ENCODE measurements at regions of chr6 and their contacts with region 1.

Region 1: GRCh38 chr6:97394160-97394748 is 111.2 kb upstream of the MMS22L start:
- DNase-seq: peak; percentile 63
- ATAC-seq: peak; percentile 70
- H3K4me3 ChIP-seq: no peak overlapping the region
- H3K4me3 Mint-ChIP-seq: no peak overlapping the region
- H3K27ac ChIP-seq: no peak overlapping the region
- H3K27ac Mint-ChIP-seq: no peak overlapping the region
- H3K4me1 ChIP-seq: no peaks in the 10 kb centered on the region
- H3K4me1 Mint-ChIP-seq: no peaks in the 10 kb centered on the region
- H3K27me3 ChIP-seq: no peaks in the 10 kb centered on the region
- H3K27me3 Mint-ChIP-seq: peaks cover 15% of the 10 kb centered on the region
- CTCF ChIP-seq: peak; percentile 98

Region 2: GRCh38 chr6:96626759-96627364 is 767.4 kb before region 1 on chr6:
- CTCF ChIA-PET with region 1: no interaction called
- POLR2A ChIA-PET with region 1: no interaction called
- intact Hi-C with region 1: loop called (anchors 5 kb)
- DNase-seq: peak; percentile 40
- ATAC-seq: peak; percentile 67
- H3K4me3 ChIP-seq: no peak overlapping the region
- H3K4me3 Mint-ChIP-seq: no peak overlapping the region
- H3K27ac ChIP-seq: no peak overlapping the region
- H3K27ac Mint-ChIP-seq: no peak overlapping the region
- H3K4me1 ChIP-seq: peaks cover 3 to 4% of the 10 kb centered on the region in 2 donors
- H3K4me1 Mint-ChIP-seq: peaks cover 4% of the 10 kb centered on the region
- H3K27me3 ChIP-seq: no peaks in the 10 kb centered on the region
- H3K27me3 Mint-ChIP-seq: peaks cover 13% of the 10 kb centered on the region
- CTCF ChIP-seq: peak; percentile 63

Region 3: DNA sequence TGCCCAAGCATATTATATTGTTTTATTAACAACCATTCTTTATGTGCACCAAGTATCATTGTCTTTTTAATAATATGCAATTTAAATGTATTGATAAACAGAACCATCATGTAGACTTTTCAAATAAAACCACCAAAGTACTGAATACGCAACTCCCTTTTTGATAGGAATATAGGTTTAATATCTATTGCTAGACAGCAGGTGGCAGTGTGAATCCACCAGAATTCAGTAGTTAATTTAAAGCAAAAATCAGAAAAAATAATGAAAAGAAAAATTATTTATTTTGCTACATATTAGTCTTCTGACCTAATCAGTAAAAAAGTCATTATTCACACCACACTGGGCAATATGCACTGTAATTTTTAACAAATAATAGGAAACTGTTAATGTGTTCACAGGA is 326.0 kb before region 1 on chr6:
- CTCF ChIA-PET with region 1: interaction called, 6 read pairs
- POLR2A ChIA-PET with region 1: no interaction called
- intact Hi-C with region 1: loop called (anchors 1 kb)
- DNase-seq: peak; percentile 14
- ATAC-seq: no peak
- H3K4me3 ChIP-seq: no peak overlapping the region
- H3K4me3 Mint-ChIP-seq: no peak overlapping the region
- H3K27ac ChIP-seq: no peak overlapping the region
- H3K27ac Mint-ChIP-seq: no peak overlapping the region
- H3K4me1 ChIP-seq: no peaks in the 10 kb centered on the region
- H3K4me1 Mint-ChIP-seq: no peaks in the 10 kb centered on the region
- H3K27me3 ChIP-seq: no peaks in the 10 kb centered on the region
- H3K27me3 Mint-ChIP-seq: peaks cover 6% of the 10 kb centered on the region
- CTCF ChIP-seq: peak; percentile 64

Region 4: DNA sequence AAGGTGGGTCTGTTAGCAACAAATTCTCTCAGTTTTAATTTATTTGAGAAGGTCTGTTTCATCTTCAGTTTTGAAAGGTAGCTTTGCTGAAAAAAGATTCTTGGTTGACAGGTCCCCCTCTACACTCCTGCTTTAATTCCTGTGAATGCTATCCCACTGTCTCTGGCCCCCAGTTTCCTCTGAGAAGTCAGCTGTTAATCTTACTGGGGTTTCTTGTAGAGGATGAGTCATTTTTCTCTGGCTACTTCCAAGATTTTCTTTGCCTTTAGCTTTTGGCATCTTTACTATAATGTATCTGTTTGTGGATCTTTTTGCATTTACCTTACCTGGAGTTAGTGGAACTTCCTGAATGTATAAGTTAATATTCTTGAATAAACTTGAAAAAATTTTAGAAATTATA is 234.0 kb before region 1 on chr6:
- CTCF ChIA-PET with region 1: no interaction called
- POLR2A ChIA-PET with region 1: no interaction called
- intact Hi-C with region 1: no loop called
- DNase-seq: no peak
- ATAC-seq: no peak
- H3K4me3 ChIP-seq: no peak overlapping the region
- H3K4me3 Mint-ChIP-seq: no peak overlapping the region
- H3K27ac ChIP-seq: no peak overlapping the region
- H3K27ac Mint-ChIP-seq: no peak overlapping the region
- H3K4me1 ChIP-seq: no peaks in the 10 kb centered on the region
- H3K4me1 Mint-ChIP-seq: no peaks in the 10 kb centered on the region
- H3K27me3 ChIP-seq: no peaks in the 10 kb centered on the region
- H3K27me3 Mint-ChIP-seq: no peaks in the 10 kb centered on the region
- CTCF ChIP-seq: no peak

Region 5: DNA sequence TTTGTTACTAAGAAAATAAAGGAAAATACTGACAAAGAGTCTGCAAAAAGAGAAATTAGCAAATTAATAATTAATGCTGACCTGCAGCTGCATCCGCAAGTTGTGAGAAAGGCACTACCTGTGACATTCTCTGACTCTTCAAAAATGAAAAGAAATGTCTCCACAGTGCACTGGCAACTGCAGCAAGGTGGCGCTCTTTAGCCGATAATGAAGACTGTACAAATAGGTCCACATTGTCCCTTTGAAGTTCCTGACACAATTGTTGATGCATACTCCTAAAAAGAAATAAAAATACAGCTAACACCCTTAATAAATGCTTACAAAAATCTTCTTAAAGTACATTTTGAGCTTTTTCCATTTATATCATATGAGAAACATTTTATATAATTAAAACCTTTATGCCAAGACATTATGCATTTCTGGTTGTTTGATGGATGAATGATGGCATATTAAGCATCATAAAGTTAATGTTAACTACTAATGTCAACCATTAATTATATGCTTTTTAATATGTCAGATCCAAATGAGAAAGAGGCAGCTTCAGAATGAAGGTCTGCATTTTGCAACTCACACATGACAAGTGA is 207.7 kb before region 1 on chr6:
- CTCF ChIA-PET with region 1: interaction called, 40 read pairs
- POLR2A ChIA-PET with region 1: no interaction called
- intact Hi-C with region 1: loop called (anchors 1 kb)
- DNase-seq: peak; percentile 63
- ATAC-seq: peak; percentile 66
- H3K4me3 ChIP-seq: no peak overlapping the region
- H3K4me3 Mint-ChIP-seq: no peak overlapping the region
- H3K27ac ChIP-seq: no peak overlapping the region
- H3K27ac Mint-ChIP-seq: no peak overlapping the region
- H3K4me1 ChIP-seq: no peaks in the 10 kb centered on the region
- H3K4me1 Mint-ChIP-seq: no peaks in the 10 kb centered on the region
- H3K27me3 ChIP-seq: no peaks in the 10 kb centered on the region
- H3K27me3 Mint-ChIP-seq: no peaks in the 10 kb centered on the region
- CTCF ChIP-seq: peak; percentile 95

Region 6: DNA sequence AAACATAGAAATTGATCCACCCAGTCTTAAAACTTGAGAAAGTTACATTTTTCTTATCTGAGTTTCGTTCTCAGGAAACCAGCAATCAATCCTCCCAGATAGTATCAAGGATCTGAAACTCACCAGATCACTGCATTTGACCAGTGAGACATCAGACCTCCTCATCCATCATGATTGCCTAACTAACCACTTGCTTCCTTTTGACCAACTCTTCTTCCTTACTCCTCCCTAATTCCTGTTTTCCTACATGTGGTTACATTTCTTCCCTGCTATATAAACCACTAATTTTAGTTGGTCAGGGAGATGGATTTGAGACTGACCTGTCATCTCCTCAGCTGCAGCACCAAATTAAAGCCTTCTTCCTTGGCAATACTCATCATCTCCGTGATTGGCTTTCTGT is 1083.0 kb after region 1 on chr6:
- CTCF ChIA-PET with region 1: no interaction called
- POLR2A ChIA-PET with region 1: no interaction called
- intact Hi-C with region 1: no loop called
- DNase-seq: no peak
- ATAC-seq: no peak
- H3K4me3 ChIP-seq: no peak overlapping the region
- H3K4me3 Mint-ChIP-seq: no peak overlapping the region
- H3K27ac ChIP-seq: no peak overlapping the region
- H3K27ac Mint-ChIP-seq: no peak overlapping the region
- H3K4me1 ChIP-seq: no peaks in the 10 kb centered on the region
- H3K4me1 Mint-ChIP-seq: no peaks in the 10 kb centered on the region
- H3K27me3 ChIP-seq: no peaks in the 10 kb centered on the region
- H3K27me3 Mint-ChIP-seq: no peaks in the 10 kb centered on the region
- CTCF ChIP-seq: no peak

Region 7: DNA sequence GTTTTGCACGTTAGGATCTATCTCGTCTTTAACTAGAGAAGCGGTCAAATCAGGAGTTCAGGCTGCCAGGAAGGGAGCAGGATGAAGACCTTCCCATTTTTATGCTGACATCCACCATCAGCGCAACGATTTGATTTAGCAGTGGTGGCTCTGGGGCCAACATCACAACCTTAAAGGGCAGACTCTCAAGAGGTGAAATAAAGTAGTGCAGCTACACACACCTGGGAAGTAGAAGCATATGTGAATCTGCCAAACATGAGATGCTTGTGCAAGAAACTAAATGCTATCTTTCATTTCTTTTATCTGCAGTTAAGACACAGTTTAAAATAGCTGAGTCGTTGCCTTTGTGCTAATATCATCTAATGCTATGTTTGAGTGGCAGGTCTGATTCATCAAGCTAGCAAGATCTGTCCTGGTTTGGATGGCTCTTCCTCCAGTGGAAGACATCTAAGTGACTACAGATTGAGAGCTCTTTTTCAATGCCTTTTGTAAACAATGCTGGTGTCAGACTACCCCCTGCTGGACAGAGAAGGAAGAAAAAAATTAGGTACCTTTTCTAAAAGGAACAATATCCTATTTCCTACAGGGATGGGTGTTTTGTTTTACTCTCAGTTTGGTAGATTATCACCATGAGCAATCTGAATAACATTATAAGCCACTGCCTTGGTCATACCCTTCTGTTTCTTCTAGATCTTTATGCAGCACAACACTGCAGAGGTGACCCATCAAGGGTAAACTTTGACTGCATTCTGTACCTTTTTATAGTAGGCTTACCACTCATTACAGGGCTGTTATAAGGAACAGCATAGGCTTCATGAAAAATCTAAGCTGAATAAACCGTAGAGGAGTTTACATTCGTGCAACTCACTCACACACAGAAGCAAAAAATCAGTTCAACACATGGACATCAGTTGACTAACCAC is 1725.1 kb after region 1 on chr6:
- CTCF ChIA-PET with region 1: no interaction called
- POLR2A ChIA-PET with region 1: no interaction called
- intact Hi-C with region 1: loop called (anchors 10 kb)
- DNase-seq: peak; percentile 44
- ATAC-seq: no peak
- H3K4me3 ChIP-seq: no peak overlapping the region
- H3K4me3 Mint-ChIP-seq: no peak overlapping the region
- H3K27ac ChIP-seq: no peak overlapping the region
- H3K27ac Mint-ChIP-seq: no peak overlapping the region
- H3K4me1 ChIP-seq: no peaks in the 10 kb centered on the region
- H3K4me1 Mint-ChIP-seq: no peaks in the 10 kb centered on the region
- H3K27me3 ChIP-seq: no peaks in the 10 kb centered on the region
- H3K27me3 Mint-ChIP-seq: peaks cover 35% of the 10 kb centered on the region
- CTCF ChIP-seq: peak; percentile 82